ENCODE measurements at regions of chr1 and their contacts with region 1.

Region 1: GRCh38 chr1:182789138-182790076 is at the start of gene NPL:
- DNase-seq: peak; percentile 82
- H3K4me3 Mint-ChIP-seq: peak within 1 kb of the TSS; percentile 86
- H3K27ac Mint-ChIP-seq: no peak within 1 kb of the TSS
- H3K4me1 Mint-ChIP-seq: peaks cover 6% of the 10 kb centered on the region
- H3K27me3 Mint-ChIP-seq: peaks cover 23% of the 10 kb centered on the region
- total RNA-seq, gene NPL: 3.0 and 4.6 TPM in 2 replicates

Region 2: DNA sequence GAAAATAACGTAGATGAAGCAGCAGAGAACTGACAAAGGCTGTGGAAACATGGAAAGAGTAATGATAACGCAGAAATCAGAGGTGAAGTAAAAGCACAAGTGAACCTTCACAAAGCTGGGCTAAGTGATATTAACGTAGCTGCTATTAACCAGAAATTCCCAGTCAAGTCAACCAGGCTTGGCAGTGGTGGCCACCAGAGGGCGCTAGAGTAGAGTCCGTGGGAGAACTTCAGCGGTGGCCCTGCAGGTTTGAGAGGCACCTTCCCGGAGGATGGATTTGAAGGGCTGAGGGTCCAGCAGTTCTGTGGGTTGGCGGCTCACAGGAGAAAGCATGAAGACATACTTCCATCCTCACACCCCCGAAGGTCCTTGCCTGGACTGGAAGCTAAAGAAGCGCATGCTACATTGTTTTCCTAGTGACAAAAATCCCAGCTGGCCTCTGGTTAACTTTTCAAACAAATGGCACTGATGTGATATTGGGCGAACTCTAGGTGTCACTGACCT is 646.2 kb before region 1 on chr1:
- intact Hi-C with region 1: loop called (anchors 10 kb)
- DNase-seq: peak; percentile 71
- H3K4me3 Mint-ChIP-seq: no peak overlapping the region
- H3K27ac Mint-ChIP-seq: no peak overlapping the region
- H3K4me1 Mint-ChIP-seq: peaks cover 12% of the 10 kb centered on the region
- H3K27me3 Mint-ChIP-seq: peaks cover 6% of the 10 kb centered on the region

Region 3: DNA sequence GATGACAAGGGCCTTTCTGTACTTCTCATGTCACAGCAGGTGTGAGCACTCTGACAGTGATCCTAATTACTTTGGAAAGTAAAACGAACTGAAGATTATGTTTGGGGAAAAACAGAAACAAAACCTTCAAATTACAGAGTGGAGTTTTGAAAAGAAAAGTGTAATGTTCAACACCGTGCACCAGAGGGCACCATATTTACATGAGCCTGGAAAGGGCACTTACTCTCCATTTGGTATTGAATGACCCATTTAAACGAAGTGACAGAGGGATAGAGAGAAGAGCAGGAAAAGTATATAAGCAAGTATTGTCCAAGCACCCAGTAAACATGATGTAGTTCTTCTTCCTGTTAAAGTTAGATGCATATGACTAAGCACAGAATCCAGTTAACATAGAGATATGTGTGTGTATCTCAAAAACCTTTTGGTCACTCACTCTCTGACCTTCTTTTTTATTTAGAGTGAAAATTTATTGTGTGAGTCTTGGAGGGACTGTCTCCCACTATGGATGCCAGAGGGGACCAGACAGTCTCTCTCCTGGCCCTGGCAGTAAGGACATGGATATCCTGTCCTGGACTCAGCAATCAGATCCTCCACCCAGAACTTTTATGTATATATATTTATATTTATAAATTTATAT is 343.3 kb before region 1 on chr1:
- intact Hi-C with region 1: loop called (anchors 1 kb)
- DNase-seq: no peak
- H3K4me3 Mint-ChIP-seq: no peak overlapping the region
- H3K27ac Mint-ChIP-seq: no peak overlapping the region
- H3K4me1 Mint-ChIP-seq: peaks cover 3% of the 10 kb centered on the region
- H3K27me3 Mint-ChIP-seq: peaks cover 6% of the 10 kb centered on the region

Region 4: DNA sequence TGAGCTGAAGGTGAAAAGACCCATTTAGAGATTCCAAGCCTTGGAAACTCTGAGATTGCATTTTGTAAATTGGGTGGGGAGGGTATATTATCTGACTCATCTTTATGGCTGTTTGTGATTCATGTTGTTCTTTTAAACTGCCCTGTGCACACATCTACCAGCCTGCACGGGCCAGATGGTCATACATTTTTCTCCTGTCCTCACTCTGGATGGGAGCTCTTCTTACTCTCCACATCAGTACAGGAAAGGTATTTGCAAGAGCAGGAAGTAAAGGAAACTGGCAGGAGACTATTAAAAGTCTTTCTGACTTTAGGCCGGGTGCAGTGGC is 643.1 kb after region 1 on chr1:
- intact Hi-C with region 1: no loop called
- DNase-seq: no peak
- H3K4me3 Mint-ChIP-seq: no peak overlapping the region
- H3K27ac Mint-ChIP-seq: no peak overlapping the region
- H3K4me1 Mint-ChIP-seq: no peaks in the 10 kb centered on the region
- H3K27me3 Mint-ChIP-seq: peaks cover 20% of the 10 kb centered on the region